Calu3 (cell line): ENCODE measurements at regions of chr10 and their contacts with region 1.

Region 1: DNA sequence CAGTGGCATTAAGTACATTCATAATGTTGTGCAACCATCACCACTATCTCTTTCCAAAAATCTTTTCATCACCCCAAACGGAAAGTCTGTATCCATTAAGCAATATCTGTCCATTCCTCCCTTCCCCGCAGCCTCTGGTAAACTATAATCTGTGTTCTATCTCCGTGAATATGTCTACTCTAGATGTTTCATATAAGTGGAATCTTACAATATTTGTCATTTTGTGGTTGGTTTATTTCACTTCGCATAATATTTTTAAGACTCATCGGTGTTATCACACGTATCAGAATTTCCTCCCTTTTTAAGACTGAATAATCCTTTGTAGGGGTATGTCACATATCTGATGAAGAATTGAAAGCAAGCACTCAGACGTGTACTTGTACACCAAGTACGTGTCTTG is 86.0 kb upstream of the FGFR2 start:
- DNase-seq: no peak
- H3K4me3 Mint-ChIP-seq: no peak overlapping the region
- H3K27ac Mint-ChIP-seq: no peak overlapping the region
- H3K4me1 Mint-ChIP-seq: no peaks in the 10 kb centered on the region
- H3K27me3 Mint-ChIP-seq: peaks cover 74% of the 10 kb centered on the region
- CTCF ChIP-seq: no peak

Region 2: DNA sequence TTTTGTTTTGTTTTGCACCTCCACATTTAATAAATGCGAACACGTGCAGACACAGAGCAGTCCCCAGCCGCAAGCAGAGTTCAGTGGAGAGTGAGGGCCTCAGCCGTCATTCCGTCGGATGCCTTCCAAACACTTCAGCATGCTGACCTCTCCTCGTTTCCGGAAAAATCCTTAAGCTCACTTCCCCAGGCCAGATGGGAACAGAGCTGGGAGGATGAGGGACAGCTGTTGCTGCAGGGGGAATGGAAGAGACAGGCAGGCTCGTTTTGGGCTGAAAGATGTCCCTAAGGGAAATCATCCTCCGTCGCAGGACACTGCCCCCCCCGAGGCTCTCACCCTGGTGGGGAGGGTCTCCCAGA is 68.9 kb before region 1 on chr10:
- CTCF ChIA-PET with region 1: no interaction called
- intact Hi-C with region 1: no loop called
- DNase-seq: no peak
- H3K4me3 Mint-ChIP-seq: no peak overlapping the region
- H3K27ac Mint-ChIP-seq: no peak overlapping the region
- H3K4me1 Mint-ChIP-seq: no peaks in the 10 kb centered on the region
- H3K27me3 Mint-ChIP-seq: no peaks in the 10 kb centered on the region
- CTCF ChIP-seq: no peak

Region 3: GRCh38 chr10:121664671-121665070 is 19.6 kb before region 1 on chr10:
- CTCF ChIA-PET with region 1: interaction called, 4 read pairs
- intact Hi-C with region 1: loop called (anchors 1 kb)
- DNase-seq: no peak
- H3K4me3 Mint-ChIP-seq: no peak overlapping the region
- H3K27ac Mint-ChIP-seq: no peak overlapping the region
- H3K4me1 Mint-ChIP-seq: no peaks in the 10 kb centered on the region
- H3K27me3 Mint-ChIP-seq: peaks cover 32% of the 10 kb centered on the region
- CTCF ChIP-seq: no peak